AG04450 (cell line): ENCODE measurements at regions of chr2 and their contacts with region 1.

Region 1: GRCh38 chr2:156332534-156333273 is at the start of gene NR4A2:
- DNase-seq: no peak
- H3K4me3 ChIP-seq: peak within 1 kb of the TSS; percentile 79
- H3K27ac ChIP-seq: peak within 1 kb of the TSS; percentile 99
- H3K27me3 ChIP-seq: peaks cover 4% of the 10 kb centered on the region
- CTCF ChIP-seq: no peak
- polyA plus RNA-seq, gene NR4A2: 0.93 and 1.0 TPM in 2 replicates

Region 2: DNA sequence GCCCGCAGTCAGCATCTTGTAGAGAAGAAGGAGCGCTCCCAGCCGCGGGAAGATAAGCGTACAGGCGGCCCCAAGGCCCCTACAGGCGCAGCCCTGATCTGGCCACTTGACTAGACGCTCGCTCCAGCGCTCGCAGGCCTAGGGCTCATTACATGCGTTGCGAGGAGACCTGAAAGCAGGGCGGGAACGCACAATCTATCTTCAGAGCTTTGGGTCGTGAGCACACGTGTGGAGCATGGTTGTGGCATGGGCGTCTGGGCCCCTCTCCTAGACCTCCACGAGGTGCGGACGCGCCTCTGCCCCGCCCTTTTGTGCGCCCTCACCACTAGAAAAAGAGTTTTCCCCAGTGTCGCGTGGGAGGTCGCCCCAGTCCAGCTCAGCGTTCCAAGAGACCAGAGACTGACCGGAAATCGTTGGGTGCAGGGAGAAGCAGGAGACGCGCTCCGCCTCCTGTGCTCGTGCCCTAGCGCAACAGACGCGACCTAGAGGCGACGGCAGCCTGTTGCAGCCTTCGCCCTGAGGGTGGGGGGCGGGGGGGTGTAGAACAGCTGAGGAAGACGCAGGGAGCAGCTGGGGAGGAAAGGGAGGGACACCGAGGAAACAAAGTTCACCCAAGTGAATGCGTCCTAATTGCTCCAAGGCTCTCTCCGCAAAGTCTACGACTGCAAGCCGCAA is 12.8 kb before region 1 on chr2:
- CTCF ChIA-PET with region 1: interaction called, 16 read pairs
- POLR2A ChIA-PET with region 1: interaction called, 7 read pairs
- DNase-seq: no peak
- H3K4me3 ChIP-seq: peak overlapping the region; percentile 59
- H3K27ac ChIP-seq: no peak overlapping the region
- H3K27me3 ChIP-seq: peaks cover 27% of the 10 kb centered on the region
- CTCF ChIP-seq: no peak

Region 3: DNA sequence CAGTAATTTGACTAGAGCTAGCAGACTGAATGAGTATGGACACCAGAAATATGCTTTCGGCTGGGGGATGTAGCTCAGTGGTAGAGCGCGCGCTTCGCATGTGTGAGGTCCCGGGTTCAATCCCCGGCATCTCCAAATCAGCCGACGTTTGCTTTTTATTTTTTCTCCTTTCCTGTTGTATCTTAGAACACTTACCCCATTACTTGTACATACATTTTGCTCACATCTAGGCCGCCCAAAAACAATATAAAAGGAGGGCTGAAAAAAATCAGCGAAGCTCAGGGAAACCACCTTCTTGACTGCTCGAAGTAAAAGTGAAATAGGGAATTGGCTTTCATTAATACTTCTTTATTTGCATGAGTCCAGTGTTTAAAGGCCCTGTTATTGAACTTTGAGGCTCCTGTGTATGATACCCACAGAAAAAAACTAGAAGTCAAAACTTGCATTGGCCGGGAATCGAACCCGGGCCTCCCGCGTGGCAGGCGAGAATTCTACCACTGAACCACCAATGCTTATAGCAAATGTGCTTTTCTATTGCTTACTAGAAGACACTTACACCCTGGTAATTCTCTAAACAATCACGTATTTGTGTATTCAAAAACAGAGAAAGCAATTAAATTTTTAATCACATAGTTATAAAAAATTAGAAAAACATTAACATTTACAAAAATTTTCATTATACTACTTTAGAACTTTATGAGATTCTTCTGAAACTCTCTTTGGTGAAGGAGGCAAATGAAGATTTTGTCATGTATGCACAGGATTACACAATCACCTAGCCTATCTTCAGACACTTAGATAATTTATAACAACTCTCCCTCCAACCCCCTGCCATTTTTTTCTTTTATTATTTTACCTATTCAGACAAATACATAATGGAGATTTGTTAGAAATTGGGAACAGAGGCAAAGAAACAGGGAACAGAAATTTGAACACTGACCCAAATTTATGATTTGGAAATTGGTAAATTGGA is 68.3 kb after region 1 on chr2:
- CTCF ChIA-PET with region 1: interaction called, 18 read pairs
- POLR2A ChIA-PET with region 1: interaction called, 13 read pairs
- DNase-seq: peak; percentile 67
- H3K4me3 ChIP-seq: peak overlapping the region; percentile 83
- H3K27ac ChIP-seq: peak overlapping the region; percentile 25
- H3K27me3 ChIP-seq: peaks cover 3% of the 10 kb centered on the region
- CTCF ChIP-seq: no peak

Region 4: GRCh38 chr2:156541229-156541628 is 208.5 kb after region 1 on chr2:
- CTCF ChIA-PET with region 1: interaction called, 12 read pairs
- POLR2A ChIA-PET with region 1: no interaction called
- DNase-seq: no peak
- H3K4me3 ChIP-seq: no peak overlapping the region
- H3K27ac ChIP-seq: no peak overlapping the region
- H3K27me3 ChIP-seq: no peaks in the 10 kb centered on the region
- CTCF ChIP-seq: no peak

Region 5: GRCh38 chr2:156565066-156565710 is 232.5 kb after region 1 on chr2:
- CTCF ChIA-PET with region 1: interaction called, 13 read pairs
- POLR2A ChIA-PET with region 1: interaction called, 3 read pairs
- DNase-seq: peak; percentile 27
- H3K4me3 ChIP-seq: no peak overlapping the region
- H3K27ac ChIP-seq: no peak overlapping the region
- H3K27me3 ChIP-seq: no peaks in the 10 kb centered on the region
- CTCF ChIP-seq: no peak

Region 6: GRCh38 chr2:157182834-157183396 is 850.2 kb after region 1 on chr2:
- CTCF ChIA-PET with region 1: interaction called, 13 read pairs
- POLR2A ChIA-PET with region 1: interaction called, 4 read pairs
- DNase-seq: peak; percentile 85
- H3K4me3 ChIP-seq: no peak overlapping the region
- H3K27ac ChIP-seq: peak overlapping the region; percentile 92
- H3K27me3 ChIP-seq: no peaks in the 10 kb centered on the region
- CTCF ChIP-seq: no peak